Astrocyte of the cerebellum (primary cell): ENCODE measurements at regions of chr1 and their contacts with region 1.

Region 1: DNA sequence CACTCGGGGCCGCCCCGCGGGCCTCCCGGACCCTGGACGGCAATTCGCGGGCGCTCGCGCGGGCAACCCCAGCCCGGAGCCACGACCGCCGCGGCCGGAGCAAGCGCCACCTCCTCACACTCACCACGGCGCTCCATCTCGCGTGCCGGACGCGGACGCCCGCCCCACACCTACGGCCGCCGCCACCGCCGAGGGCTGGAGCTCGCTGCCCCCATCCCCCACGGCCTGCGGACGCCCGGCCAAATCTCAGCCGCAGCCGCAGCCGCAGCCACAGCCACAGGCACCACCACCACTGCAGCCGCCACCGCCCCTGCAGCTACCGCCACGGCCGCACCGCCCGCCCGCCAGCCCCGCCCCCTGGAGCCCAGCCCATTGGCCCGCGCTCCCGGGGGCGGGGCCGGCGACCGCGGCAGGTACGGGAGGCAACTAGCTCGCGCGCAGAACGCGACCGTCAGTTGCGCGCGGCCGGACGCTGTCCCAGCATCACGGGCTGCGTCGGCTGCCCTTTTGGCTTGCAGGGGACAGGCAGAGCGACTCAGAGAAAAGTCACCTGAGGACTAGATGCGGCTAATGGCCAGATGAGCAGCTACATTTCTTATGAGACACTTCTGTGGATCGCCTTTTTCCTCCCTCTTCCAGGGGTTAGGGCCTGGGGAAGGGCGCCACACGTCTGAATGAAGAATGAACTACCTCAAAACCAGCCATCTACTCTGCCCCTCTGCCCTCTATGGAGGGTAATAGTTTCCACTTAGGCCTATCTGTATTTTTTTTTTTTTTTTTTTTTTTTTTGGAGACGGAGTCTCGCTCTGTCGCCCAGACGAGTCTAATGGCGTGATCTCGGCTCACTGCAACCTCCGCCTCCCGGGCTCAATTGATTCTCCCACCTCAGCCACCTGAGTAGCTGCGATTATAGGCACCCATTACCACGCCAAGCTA is at the start of gene ARHGAP29:
- DNase-seq: no peak
- H3K4me3 ChIP-seq: peak within 1 kb of the TSS; percentile 84
- CTCF ChIP-seq: no peak

Region 2: GRCh38 chr1:94033849-94034248 is 203.7 kb before region 1 on chr1:
- in situ Hi-C with region 1: loop called (anchors 5 kb)
- DNase-seq: no peak
- H3K4me3 ChIP-seq: no peak overlapping the region
- CTCF ChIP-seq: no peak

Region 3: DNA sequence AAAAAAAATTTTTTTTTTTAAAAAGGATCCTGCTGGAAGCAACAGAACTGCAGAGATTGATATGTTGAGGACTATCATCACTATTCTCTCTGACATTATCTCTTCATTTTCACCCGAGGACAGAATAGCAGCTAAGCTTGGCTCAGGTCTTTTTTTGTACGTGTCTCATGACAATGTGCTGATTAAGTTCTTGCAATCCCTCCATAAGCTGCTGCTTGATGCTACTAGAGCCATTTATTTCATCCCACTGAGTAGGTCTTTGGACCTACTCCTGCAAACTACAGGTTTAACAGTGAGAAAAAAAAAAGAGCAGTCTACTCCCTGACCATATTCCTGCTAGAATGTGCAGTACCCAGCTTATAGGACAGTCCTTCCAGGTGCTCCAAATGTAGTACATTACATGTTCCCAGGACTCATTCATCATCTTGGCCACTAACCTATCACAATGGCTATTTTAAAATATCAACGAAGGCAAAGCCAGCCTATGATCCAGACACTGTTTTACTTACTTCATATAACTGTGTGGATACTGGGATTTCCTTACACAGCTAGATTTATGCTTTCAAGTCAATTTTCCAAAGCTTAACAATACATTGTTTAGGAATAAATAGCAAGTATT is 54.3 kb before region 1 on chr1:
- in situ Hi-C with region 1: no loop called
- DNase-seq: no peak
- H3K4me3 ChIP-seq: no peak overlapping the region
- CTCF ChIP-seq: no peak

Region 4: GRCh38 chr1:94296018-94296417 is 58.5 kb after region 1 on chr1:
- in situ Hi-C with region 1: no loop called
- DNase-seq: peak; percentile 86
- H3K4me3 ChIP-seq: no peak overlapping the region
- CTCF ChIP-seq: no peak

Region 5: DNA sequence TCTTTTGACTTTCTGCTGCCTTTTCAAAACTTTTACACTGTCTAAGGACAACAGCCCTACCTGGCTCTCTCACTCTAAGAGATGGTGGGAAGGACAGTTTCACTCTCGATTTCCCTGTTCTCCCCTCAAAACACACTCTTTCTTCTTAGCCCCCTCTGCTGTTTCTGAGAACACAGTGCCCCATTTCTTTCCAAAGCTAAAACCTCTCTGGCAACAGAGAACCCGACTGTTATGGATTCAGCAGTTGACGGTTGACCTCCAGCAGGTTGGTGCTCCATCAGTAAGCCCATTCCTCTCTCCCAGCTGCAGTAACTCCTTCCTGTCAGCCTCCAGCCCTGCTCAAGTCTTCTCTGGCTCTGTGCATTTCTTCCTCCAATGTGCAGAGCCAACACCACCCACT is 92.4 kb after region 1 on chr1:
- in situ Hi-C with region 1: loop called (anchors 10 kb)
- DNase-seq: peak; percentile 53
- H3K4me3 ChIP-seq: no peak overlapping the region
- CTCF ChIP-seq: peak; percentile 77